GM10248 (cell line): ENCODE measurements at regions of chr22 and their contacts with region 1.

Region 1: DNA sequence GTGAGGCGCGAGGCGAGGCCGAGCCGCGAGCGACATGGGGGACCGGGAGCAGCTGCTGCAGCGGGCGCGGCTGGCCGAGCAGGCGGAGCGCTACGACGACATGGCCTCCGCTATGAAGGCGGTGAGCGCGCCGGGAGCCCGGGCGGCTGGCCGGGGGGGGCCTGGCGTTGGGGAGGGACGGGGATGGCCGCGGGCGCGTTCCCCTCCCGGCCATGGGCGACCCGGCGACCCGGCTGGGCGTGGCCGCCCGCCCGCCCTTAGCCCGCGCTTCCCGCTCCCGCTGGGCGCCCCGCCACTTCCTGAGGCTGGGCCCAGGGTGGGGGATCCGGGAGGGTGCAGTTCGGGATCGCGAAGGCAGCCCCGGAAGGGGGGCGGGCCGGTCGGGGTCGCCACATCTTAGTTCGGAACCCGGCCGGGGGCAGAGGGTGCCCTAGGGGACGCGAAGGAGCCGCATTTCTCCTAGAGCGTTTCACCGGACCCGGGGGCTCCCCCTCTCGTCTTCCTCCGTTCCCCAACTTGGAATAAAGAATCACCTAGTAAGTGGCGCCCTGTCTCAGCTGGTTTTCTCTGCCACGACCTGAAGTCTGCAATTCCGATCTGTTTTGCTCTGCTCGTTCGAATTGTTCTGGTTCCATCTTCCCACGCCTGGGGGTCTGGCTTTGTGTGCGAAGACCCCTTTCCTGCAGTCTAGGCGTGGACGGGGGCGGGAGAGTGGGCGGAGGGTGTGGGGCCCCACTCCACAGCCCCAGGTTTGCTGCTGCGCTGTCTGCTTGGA is 552 bp downstream of the YWHAH start:
- DNase-seq: no peak
- CTCF ChIP-seq: no peak

Region 2: GRCh38 chr22:31802575-31802974 is 142.3 kb before region 1 on chr22:
- CTCF ChIA-PET with region 1: no interaction called
- POLR2A ChIA-PET with region 1: interaction called, 13 read pairs
- DNase-seq: no peak
- CTCF ChIP-seq: no peak

Region 3: DNA sequence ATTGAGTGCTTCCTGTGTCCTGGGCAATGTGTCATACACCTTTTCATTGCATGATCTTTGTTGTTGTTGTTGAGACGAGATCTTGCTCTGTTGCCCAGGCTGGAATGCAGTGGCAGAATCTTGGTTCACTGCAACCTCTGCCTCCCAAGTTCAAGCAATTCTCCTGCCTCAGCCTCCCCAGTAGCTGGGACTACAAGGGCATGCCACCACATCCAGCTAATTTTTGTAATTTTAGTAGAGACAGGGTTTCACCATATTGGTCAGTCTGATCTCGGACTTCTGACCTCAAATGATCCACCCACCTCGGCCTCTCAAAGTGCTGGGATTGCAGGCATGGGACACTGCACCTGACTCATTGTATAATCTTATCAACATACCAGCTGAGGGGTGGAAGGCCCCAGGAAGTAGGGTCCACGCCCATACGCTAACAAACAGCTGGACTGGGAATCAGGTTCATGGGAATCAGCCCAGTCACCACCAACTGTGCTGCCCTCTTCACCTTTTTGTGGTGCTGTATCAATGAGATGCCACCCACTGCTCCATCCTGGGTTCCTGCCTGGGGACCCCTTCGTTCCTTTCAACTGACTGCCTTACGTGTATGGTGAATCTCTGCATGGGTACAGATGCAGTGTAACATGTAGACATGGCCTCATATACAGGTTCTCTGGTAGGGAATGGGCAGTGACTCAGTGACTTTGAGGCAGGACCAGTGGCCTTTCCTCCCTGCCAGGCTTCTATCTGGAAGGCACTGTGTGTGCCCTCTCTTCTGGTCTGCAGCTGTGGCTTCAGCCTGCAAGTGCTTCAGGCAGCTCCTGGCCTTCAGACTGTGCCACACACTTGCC is 33.1 kb before region 1 on chr22:
- CTCF ChIA-PET with region 1: no interaction called
- POLR2A ChIA-PET with region 1: no interaction called
- DNase-seq: no peak
- CTCF ChIP-seq: no peak